CD14-positive monocyte (primary cell): ENCODE measurements at regions of chr3 and their contacts with region 1.

Region 1: GRCh38 chr3:112128843-112129727 is 4.0 kb downstream of the GCSAM start:
- DNase-seq: peak; percentile 37 to 64 (median 46)
- H3K4me3 ChIP-seq: no peak overlapping the region
- H3K4me3 Mint-ChIP-seq: no peak overlapping the region
- H3K27ac ChIP-seq: no peak overlapping the region
- H3K27ac Mint-ChIP-seq: peak overlapping the region in 4 of 7 donors; percentile 1 to 62 (median 18)
- H3K4me1 ChIP-seq: peaks cover 26 to 50% of the 10 kb centered on the region in 2 donors
- H3K4me1 Mint-ChIP-seq: peaks cover 59% of the 10 kb centered on the region
- H3K27me3 ChIP-seq: no peaks in the 10 kb centered on the region
- H3K27me3 Mint-ChIP-seq: peaks cover 0 to 4% (median 2%) of the 10 kb centered on the region in 3 donors
- CTCF ChIP-seq: no peak

Region 2: GRCh38 chr3:112303764-112304325 is 174.8 kb after region 1 on chr3:
- intact Hi-C with region 1: loop called in 1 of 2 experiments (anchors 10 kb)
- DNase-seq: peak; percentile 28 to 50 (median 48)
- H3K4me3 ChIP-seq: peak overlapping the region; percentile 35 to 79 (median 76)
- H3K4me3 Mint-ChIP-seq: no peak overlapping the region
- H3K27ac ChIP-seq: no peak overlapping the region
- H3K27ac Mint-ChIP-seq: no peak overlapping the region
- H3K4me1 ChIP-seq: peaks cover 12 to 13% of the 10 kb centered on the region in 2 donors
- H3K4me1 Mint-ChIP-seq: no peaks in the 10 kb centered on the region
- H3K27me3 ChIP-seq: no peaks in the 10 kb centered on the region
- H3K27me3 Mint-ChIP-seq: no peaks in the 10 kb centered on the region
- CTCF ChIP-seq: no peak

Region 3: DNA sequence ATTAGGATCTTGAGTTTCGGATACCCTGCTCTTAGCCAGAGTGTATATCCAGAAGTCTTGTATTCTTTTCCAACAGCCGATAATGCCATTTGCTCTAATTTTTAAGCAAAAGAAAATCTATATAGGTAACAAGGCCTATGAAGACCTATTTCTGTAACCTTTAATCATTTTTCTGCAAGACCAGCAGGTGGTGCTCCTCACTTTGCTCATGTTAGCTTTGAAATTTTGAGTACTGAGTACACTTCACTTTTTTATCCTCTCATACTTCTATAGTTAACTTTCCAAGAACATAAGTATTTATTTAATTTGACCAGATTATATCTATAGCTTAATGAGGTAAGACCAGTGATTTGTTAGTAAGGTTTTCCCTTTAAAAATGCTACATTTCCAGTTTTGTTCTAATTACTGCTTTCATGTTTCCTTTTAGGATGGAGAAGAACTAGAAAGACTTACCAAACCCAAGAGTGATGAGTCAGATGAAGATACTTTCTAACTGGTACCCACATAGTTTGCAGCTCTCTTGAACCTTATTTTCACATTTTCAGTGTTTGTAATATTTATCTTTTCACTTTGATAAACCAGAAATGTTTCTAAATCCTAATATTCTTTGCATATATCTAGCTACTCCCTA is 453.3 kb after region 1 on chr3:
- intact Hi-C with region 1: loop called in 1 of 2 experiments (anchors 5 kb)
- DNase-seq: peak in 1 of 3 donors; percentile 11
- H3K4me3 ChIP-seq: no peak overlapping the region
- H3K4me3 Mint-ChIP-seq: no peak overlapping the region
- H3K27ac ChIP-seq: no peak overlapping the region
- H3K27ac Mint-ChIP-seq: no peak overlapping the region
- H3K4me1 ChIP-seq: peaks cover 16 to 17% of the 10 kb centered on the region in 2 donors
- H3K4me1 Mint-ChIP-seq: peaks cover 26% of the 10 kb centered on the region
- H3K27me3 ChIP-seq: no peaks in the 10 kb centered on the region
- H3K27me3 Mint-ChIP-seq: no peaks in the 10 kb centered on the region
- CTCF ChIP-seq: peak; percentile 63